GM12878 (cell line): ENCODE measurements at regions of chr1 and their contacts with region 1.

Region 1: GRCh38 chr1:71049951-71050598 is 2.5 kb upstream of the PTGER3 start:
- DNase-seq: peak; percentile 25
- ATAC-seq: peak; percentile 77
- H3K4me3 ChIP-seq: no peak overlapping the region
- H3K27ac ChIP-seq: no peak overlapping the region
- H3K4me1 ChIP-seq: no peaks in the 10 kb centered on the region
- H3K27me3 ChIP-seq: peaks cover 7 to 8% of the 10 kb centered on the region in 2 experiments
- CTCF ChIP-seq: peak; percentile 65 to 83 (median 77)
- EP300 ChIP-seq: no peak
- POLR2A ChIP-seq: no peak
- RAD21 ChIP-seq: peak; percentile 81

Region 2: GRCh38 chr1:70528590-70529333 is 521.3 kb before region 1 on chr1:
- CTCF ChIA-PET with region 1: interaction called, 7 read pairs
- POLR2A ChIA-PET with region 1: no interaction called
- RAD21 ChIA-PET with region 1: interaction called, 5 read pairs
- SMC1A ChIA-PET with region 1: interaction called, 5 read pairs
- in situ Hi-C with region 1: loop called (anchors 5 kb)
- intact Hi-C with region 1: loop called (anchors 2 kb)
- DNase-seq: no peak
- ATAC-seq: peak; percentile 89
- H3K4me3 ChIP-seq: no peak overlapping the region
- H3K27ac ChIP-seq: no peak overlapping the region
- H3K4me1 ChIP-seq: no peaks in the 10 kb centered on the region
- H3K27me3 ChIP-seq: no peaks in the 10 kb centered on the region; a peak in 2 of 4 replicates
- CTCF ChIP-seq: peak; percentile 44 to 65 (median 60)
- EP300 ChIP-seq: no peak
- POLR2A ChIP-seq: no peak
- RAD21 ChIP-seq: peak; percentile 41

Region 3: DNA sequence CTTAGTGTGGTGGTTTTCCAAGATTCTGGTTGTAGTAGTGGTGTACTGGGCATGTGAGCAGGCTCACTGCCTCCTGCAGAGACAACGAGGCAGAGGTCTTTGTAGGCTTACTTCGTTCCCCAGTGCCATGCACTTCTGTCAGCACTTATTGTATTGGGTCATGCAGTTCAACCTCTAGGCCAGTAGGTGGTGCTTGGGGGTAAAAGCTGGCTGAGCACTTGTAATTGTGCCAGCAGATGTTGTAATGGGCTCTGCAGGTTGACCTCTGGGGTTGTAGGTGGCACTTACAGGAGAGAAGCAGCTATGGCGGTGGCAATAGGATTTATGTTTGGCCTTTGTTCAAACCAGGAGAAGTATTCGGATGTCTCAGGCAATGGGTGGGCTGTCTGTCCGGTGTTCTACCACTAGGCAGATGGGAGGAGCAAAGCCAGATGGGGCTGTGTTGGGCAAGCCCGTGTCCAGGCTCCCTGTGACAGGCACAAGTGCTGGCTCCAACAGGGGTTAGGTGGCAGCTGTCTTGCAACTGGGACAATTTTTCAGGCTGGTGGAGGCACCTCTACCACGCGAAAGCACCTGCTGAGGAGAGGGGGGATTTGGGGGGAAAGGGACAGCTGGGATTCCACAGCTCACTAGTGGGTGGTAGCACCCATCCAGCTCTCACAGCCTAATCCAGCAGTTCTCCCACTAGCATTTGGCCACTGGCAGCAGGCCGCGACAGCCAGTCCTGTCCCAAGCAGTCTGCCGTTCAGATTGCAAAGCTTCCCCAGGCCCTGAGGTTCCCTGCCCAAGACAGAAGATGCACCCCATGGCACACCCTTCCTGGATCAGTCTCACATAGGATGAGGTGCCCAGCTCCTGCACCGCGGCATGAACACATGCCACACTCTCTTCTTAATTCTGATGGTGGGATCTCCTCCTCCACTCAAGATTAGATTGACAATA is 364.5 kb before region 1 on chr1:
- CTCF ChIA-PET with region 1: interaction called, 33 read pairs
- POLR2A ChIA-PET with region 1: no interaction called
- RAD21 ChIA-PET with region 1: interaction called, 10 read pairs
- SMC1A ChIA-PET with region 1: interaction called, 10 read pairs
- in situ Hi-C with region 1: loop called (anchors 5 kb)
- intact Hi-C with region 1: loop called (anchors 1 kb)
- DNase-seq: peak; percentile 13
- ATAC-seq: peak; percentile 99
- H3K4me3 ChIP-seq: no peak overlapping the region
- H3K27ac ChIP-seq: no peak overlapping the region
- H3K4me1 ChIP-seq: no peaks in the 10 kb centered on the region
- H3K27me3 ChIP-seq: no peaks in the 10 kb centered on the region; a peak in 1 of 4 replicates
- CTCF ChIP-seq: peak; percentile 85 to 92 (median 90)
- EP300 ChIP-seq: no peak
- POLR2A ChIP-seq: no peak
- RAD21 ChIP-seq: peak; percentile 80

Region 4: DNA sequence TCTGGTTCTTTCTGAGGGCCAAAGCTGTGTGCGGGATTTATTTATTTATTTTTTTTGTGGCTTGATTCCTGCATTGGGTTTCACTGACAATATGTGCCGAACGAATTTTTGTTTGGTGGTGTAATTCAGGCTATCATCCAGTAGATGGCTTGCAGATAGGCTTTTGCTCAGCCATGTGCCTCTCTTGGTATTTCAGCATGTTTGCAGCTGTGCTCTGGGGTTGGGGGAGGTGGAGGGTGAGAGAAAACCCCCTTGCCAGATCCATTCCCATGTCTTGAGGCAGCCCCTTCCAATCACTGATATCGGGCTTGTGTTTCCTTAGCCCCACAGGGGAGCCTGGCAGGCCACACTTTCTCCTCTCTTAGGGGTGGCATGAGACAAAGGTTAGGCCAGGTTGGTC is 304.9 kb before region 1 on chr1:
- CTCF ChIA-PET with region 1: no interaction called
- POLR2A ChIA-PET with region 1: no interaction called
- RAD21 ChIA-PET with region 1: no interaction called
- SMC1A ChIA-PET with region 1: interaction called, 4 read pairs
- in situ Hi-C with region 1: no loop called
- intact Hi-C with region 1: loop called (anchors 5 kb)
- DNase-seq: no peak
- ATAC-seq: peak; percentile 44; the same call in 2 of the 3 replicates
- H3K4me3 ChIP-seq: no peak overlapping the region
- H3K27ac ChIP-seq: no peak overlapping the region
- H3K4me1 ChIP-seq: no peaks in the 10 kb centered on the region
- H3K27me3 ChIP-seq: no peaks in the 10 kb centered on the region
- CTCF ChIP-seq: peak; percentile 29 to 43 (median 36); a peak in 5 of 6 replicates
- EP300 ChIP-seq: no peak
- POLR2A ChIP-seq: no peak
- RAD21 ChIP-seq: no peak

Region 5: DNA sequence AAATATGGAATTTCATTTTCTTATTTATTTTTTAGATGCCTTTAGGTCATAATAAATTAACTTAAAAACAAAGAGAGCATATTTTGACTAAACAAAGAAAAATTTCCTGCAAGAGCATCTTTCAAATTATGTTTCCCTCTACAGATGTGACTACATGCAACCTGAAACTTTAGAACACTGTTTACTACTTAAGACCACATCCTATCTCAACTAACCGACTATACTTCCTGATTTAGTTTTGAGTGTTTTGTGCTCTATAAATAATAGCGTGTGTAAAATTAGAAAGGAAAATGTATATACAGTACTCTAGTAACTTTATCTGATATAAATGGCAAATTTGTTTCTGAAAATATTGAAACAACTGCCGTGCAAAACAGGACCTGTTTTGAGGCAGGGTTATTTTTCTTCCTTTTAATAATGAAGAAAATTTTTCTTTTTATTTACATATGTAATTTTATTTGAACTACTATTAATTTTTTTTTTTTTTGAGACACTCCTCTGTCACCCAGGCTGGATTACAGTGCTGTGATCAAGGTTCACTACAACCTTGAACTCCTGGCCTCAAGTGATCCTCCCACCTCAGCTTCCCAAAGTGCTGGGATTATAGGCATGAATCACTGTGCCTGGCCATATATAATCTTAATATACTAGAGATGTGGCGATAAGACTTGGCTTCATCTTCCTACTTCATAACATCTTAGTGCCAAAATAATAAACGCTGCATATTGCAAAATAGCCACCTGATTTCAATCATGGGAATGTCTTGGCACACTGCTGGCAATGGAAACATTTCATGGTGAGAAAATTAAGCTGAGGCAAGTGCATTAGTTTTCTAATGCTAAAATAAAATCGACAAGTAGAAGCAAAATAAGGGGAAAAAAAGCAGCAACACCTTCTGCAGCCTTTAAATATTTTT is 18.5 kb after region 1 on chr1:
- CTCF ChIA-PET with region 1: interaction called, 13 read pairs
- POLR2A ChIA-PET with region 1: no interaction called
- RAD21 ChIA-PET with region 1: no interaction called
- SMC1A ChIA-PET with region 1: no interaction called
- in situ Hi-C with region 1: no loop called
- intact Hi-C with region 1: no loop called
- DNase-seq: no peak
- ATAC-seq: peak; percentile 77
- H3K4me3 ChIP-seq: no peak overlapping the region
- H3K27ac ChIP-seq: no peak overlapping the region
- H3K4me1 ChIP-seq: peaks cover 7% of the 10 kb centered on the region; the same call in 1 of the 2 replicates
- H3K27me3 ChIP-seq: no peaks in the 10 kb centered on the region
- CTCF ChIP-seq: no peak
- EP300 ChIP-seq: no peak
- POLR2A ChIP-seq: no peak
- RAD21 ChIP-seq: no peak